ENCODE measurements at regions of chr17 and their contacts with region 1.

Region 1: DNA sequence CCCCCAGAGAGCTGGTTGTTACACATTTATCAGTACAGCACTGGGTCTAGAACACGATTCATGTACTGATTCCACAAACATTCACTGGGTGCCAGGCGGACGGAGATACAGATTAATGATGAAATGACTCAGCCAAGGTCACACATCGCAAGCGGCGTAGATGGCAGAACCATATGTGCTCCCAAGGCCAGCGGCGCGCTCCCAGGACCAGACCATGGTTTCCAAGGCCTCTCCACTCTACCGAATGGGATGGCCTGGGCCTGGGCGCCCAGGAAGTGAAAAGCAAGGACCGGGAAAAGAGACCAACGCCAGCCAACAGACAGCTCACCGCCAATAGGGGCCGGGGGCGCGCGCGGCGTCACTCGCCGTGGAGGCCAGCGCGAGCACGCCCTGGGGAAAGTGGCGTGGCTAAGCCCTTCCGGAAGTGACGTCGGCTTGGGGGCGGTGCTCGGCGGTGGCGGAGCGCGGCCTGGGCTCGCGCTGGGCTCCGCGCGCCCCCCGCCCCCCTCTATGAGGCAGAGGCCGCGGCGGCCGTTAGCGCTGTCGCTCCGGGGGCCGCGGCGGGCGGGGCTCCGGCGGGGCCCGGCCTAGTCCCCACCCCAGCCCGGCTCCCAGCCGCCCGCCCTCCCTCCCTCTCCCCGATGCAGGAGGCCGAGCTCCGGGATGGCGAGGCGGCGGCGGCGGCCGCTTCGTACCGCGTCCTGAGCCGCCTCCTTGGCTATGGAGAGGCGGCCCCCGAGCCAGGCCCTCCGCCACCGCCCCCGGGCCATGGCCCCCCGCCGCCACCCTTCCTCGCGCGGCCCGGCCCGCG is at the start of gene SOCS7:
- DNase-seq: peak; percentile 58
- ATAC-seq: peak; percentile 86
- H3K4me3 ChIP-seq: peak within 1 kb of the TSS; percentile 75
- H3K27ac ChIP-seq: peak within 1 kb of the TSS; percentile 91
- H3K4me1 ChIP-seq: peaks cover 4% of the 10 kb centered on the region
- H3K27me3 ChIP-seq: no peaks in the 10 kb centered on the region
- CTCF ChIP-seq: no peak
- EP300 ChIP-seq: no peak
- POLR2A ChIP-seq: peak; percentile 94
- RAD21 ChIP-seq: no peak
- polyA plus RNA-seq, gene SOCS7: 0.93 to 1.6 TPM

Region 2: GRCh38 chr17:38322091-38322779 is 29.4 kb before region 1 on chr17:
- CTCF ChIA-PET with region 1: interaction called, 14 read pairs
- POLR2A ChIA-PET with region 1: interaction called, 6 read pairs
- RAD21 ChIA-PET with region 1: interaction called, 6 read pairs
- SMC1A ChIA-PET with region 1: interaction called, 3 read pairs
- in situ Hi-C with region 1: no loop called
- intact Hi-C with region 1: no loop called
- DNase-seq: no peak
- ATAC-seq: peak; percentile 96
- H3K4me3 ChIP-seq: no peak overlapping the region
- H3K27ac ChIP-seq: no peak overlapping the region
- H3K4me1 ChIP-seq: no peaks in the 10 kb centered on the region; the same call in 1 of the 2 replicates
- H3K27me3 ChIP-seq: no peaks in the 10 kb centered on the region
- CTCF ChIP-seq: peak; percentile 51 to 84 (median 57)
- EP300 ChIP-seq: no peak
- POLR2A ChIP-seq: no peak
- RAD21 ChIP-seq: peak; percentile 58

Region 3: DNA sequence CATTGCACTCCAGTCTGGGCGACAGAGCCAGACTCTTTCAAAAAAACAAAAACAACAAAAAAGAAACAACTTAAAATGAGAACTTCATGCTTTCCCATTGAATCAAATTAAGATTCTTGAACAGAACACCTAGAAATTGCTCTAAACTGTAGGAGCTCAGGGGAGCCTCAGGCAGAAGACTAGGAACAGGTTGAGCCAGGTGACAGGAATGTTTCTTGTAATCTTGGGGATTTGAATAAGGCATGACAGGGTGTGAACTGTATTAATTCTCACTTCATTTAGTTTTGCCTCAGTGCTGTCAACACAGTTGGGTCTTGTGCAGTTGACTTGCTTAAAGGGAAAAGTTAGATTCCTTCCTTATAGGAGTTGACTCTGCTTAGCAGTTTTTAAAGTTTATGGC is 27.8 kb after region 1 on chr17:
- CTCF ChIA-PET with region 1: interaction called, 32 read pairs
- POLR2A ChIA-PET with region 1: no interaction called
- RAD21 ChIA-PET with region 1: interaction called, 4 read pairs
- SMC1A ChIA-PET with region 1: interaction called, 7 read pairs
- in situ Hi-C with region 1: no loop called
- intact Hi-C with region 1: no loop called
- DNase-seq: no peak
- ATAC-seq: no peak
- H3K4me3 ChIP-seq: no peak overlapping the region
- H3K27ac ChIP-seq: no peak overlapping the region
- H3K4me1 ChIP-seq: no peaks in the 10 kb centered on the region
- H3K27me3 ChIP-seq: no peaks in the 10 kb centered on the region
- CTCF ChIP-seq: no peak
- EP300 ChIP-seq: no peak
- POLR2A ChIP-seq: no peak
- RAD21 ChIP-seq: no peak

Region 4: GRCh38 chr17:38403491-38403890 is 51.9 kb after region 1 on chr17:
- CTCF ChIA-PET with region 1: interaction called, 20 read pairs
- POLR2A ChIA-PET with region 1: interaction called, 3 read pairs
- RAD21 ChIA-PET with region 1: interaction called, 6 read pairs
- SMC1A ChIA-PET with region 1: interaction called, 4 read pairs
- in situ Hi-C with region 1: no loop called
- intact Hi-C with region 1: no loop called
- DNase-seq: no peak
- ATAC-seq: no peak
- H3K4me3 ChIP-seq: no peak overlapping the region
- H3K27ac ChIP-seq: no peak overlapping the region
- H3K4me1 ChIP-seq: no peaks in the 10 kb centered on the region
- H3K27me3 ChIP-seq: no peaks in the 10 kb centered on the region
- CTCF ChIP-seq: no peak
- EP300 ChIP-seq: no peak
- POLR2A ChIP-seq: no peak
- RAD21 ChIP-seq: no peak

Region 5: GRCh38 chr17:38415250-38416194 is 63.9 kb after region 1 on chr17:
- CTCF ChIA-PET with region 1: interaction called, 349 read pairs
- POLR2A ChIA-PET with region 1: interaction called, 16 read pairs
- RAD21 ChIA-PET with region 1: interaction called, 172 read pairs
- SMC1A ChIA-PET with region 1: interaction called, 161 read pairs
- in situ Hi-C with region 1: loop called (anchors 5 kb)
- intact Hi-C with region 1: loop called (anchors 1 kb)
- DNase-seq: peak; percentile 11
- ATAC-seq: peak; percentile 76
- H3K4me3 ChIP-seq: no peak overlapping the region
- H3K27ac ChIP-seq: peak overlapping the region; percentile 34; the same call in 1 of the 2 replicates
- H3K4me1 ChIP-seq: peaks cover 19% of the 10 kb centered on the region
- H3K27me3 ChIP-seq: peaks cover 0 to 6% of the 10 kb centered on the region in 2 experiments; a peak in 3 of 4 replicates
- CTCF ChIP-seq: no peak
- EP300 ChIP-seq: no peak
- POLR2A ChIP-seq: no peak; the same call in 1 of the 2 replicates
- RAD21 ChIP-seq: no peak

Region 6: GRCh38 chr17:38428112-38428642 is 76.6 kb after region 1 on chr17 and contains the start of gene ARHGAP23:
- CTCF ChIA-PET with region 1: interaction called, 30 read pairs
- POLR2A ChIA-PET with region 1: interaction called, 3 read pairs
- RAD21 ChIA-PET with region 1: no interaction called
- SMC1A ChIA-PET with region 1: interaction called, 3 read pairs
- in situ Hi-C with region 1: no loop called
- intact Hi-C with region 1: no loop called
- DNase-seq: no peak
- ATAC-seq: peak; percentile 71
- H3K4me3 ChIP-seq: peak within 1 kb of the TSS; percentile 80
- H3K27ac ChIP-seq: no peak within 1 kb of the TSS
- H3K4me1 ChIP-seq: peaks cover 4% of the 10 kb centered on the region
- H3K27me3 ChIP-seq: no peaks in the 10 kb centered on the region; a peak in 1 of 4 replicates
- CTCF ChIP-seq: no peak
- EP300 ChIP-seq: no peak
- POLR2A ChIP-seq: no peak; the same call in 1 of the 2 replicates
- RAD21 ChIP-seq: no peak
- polyA plus RNA-seq, gene ARHGAP23: 0.23 to 0.35 TPM

Region 7: GRCh38 chr17:38485146-38485468 is 133.5 kb after region 1 on chr17:
- CTCF ChIA-PET with region 1: interaction called, 27 read pairs
- POLR2A ChIA-PET with region 1: no interaction called
- RAD21 ChIA-PET with region 1: no interaction called
- SMC1A ChIA-PET with region 1: interaction called, 5 read pairs
- in situ Hi-C with region 1: no loop called
- intact Hi-C with region 1: loop called (anchors 1 kb)
- DNase-seq: peak; percentile 21
- ATAC-seq: no peak
- H3K4me3 ChIP-seq: peak overlapping the region; percentile 3; the same call in 1 of the 2 replicates
- H3K27ac ChIP-seq: peak overlapping the region; percentile 50
- H3K4me1 ChIP-seq: peaks cover 17% of the 10 kb centered on the region
- H3K27me3 ChIP-seq: no peaks in the 10 kb centered on the region
- CTCF ChIP-seq: no peak
- EP300 ChIP-seq: no peak
- POLR2A ChIP-seq: no peak
- RAD21 ChIP-seq: no peak

Measured in GM12878 (cell line).